ENCODE measurements at regions of chr4 and their contacts with region 1.

Region 1: DNA sequence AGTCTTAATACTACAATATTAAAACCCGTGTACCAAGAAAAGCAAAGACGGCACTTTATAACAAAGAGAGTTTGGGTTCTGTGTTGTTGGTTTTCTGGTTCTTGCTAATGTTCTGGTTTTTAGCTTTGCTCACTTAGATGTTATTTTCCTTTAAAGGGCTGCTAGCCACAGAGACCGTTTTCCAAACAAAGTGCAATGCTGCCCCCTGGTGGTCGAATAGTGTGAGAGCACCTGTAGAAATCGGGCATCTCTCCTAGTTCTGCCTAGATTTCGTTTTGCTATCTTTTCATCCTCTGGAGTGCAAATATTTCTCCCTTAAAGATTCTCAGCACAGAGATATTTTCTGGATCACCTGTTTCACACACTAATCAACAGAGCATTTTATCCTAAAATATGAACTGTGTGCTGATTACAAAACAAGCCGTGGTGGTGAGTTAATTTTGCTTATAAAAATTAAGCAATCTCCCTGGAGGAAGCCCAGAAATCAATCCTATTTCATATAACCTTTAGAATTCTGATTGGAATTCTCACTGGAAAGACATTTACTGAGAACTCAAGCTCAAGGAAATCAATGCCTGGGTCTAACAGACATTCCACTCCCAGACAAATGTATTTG is 334.5 kb upstream of the NOCT start:
- DNase-seq: peak; percentile 62
- H3K4me3 ChIP-seq: no peak overlapping the region
- H3K27ac ChIP-seq: no peak overlapping the region
- H3K4me1 ChIP-seq: peaks cover 0 to 10% of the 10 kb centered on the region in 2 experiments; a peak in 2 of 4 replicates
- H3K27me3 ChIP-seq: no peaks in the 10 kb centered on the region
- CTCF ChIP-seq: peak; percentile 94
- EP300 ChIP-seq: no peak
- RAD21 ChIP-seq: peak; percentile 99

Region 2: GRCh38 chr4:138035781-138036258 is 645.3 kb before region 1 on chr4:
- CTCF ChIA-PET with region 1: interaction called, 49 read pairs
- POLR2A ChIA-PET with region 1: no interaction called
- DNase-seq: peak; percentile 59
- H3K4me3 ChIP-seq: no peak overlapping the region; a peak in 1 of 4 replicates
- H3K27ac ChIP-seq: no peak overlapping the region
- H3K4me1 ChIP-seq: no peaks in the 10 kb centered on the region; a peak in 1 of 4 replicates
- H3K27me3 ChIP-seq: no peaks in the 10 kb centered on the region
- CTCF ChIP-seq: peak; percentile 83
- EP300 ChIP-seq: no peak
- RAD21 ChIP-seq: peak; percentile 90

Region 3: GRCh38 chr4:138096384-138097062 is 584.6 kb before region 1 on chr4:
- CTCF ChIA-PET with region 1: interaction called, 18 read pairs
- POLR2A ChIA-PET with region 1: no interaction called
- DNase-seq: no peak
- H3K4me3 ChIP-seq: no peak overlapping the region
- H3K27ac ChIP-seq: no peak overlapping the region
- H3K4me1 ChIP-seq: no peaks in the 10 kb centered on the region
- H3K27me3 ChIP-seq: no peaks in the 10 kb centered on the region
- CTCF ChIP-seq: no peak
- EP300 ChIP-seq: no peak
- RAD21 ChIP-seq: no peak

Region 4: GRCh38 chr4:138494931-138495330 is 186.2 kb before region 1 on chr4:
- CTCF ChIA-PET with region 1: no interaction called
- POLR2A ChIA-PET with region 1: no interaction called
- DNase-seq: no peak
- H3K4me3 ChIP-seq: no peak overlapping the region
- H3K27ac ChIP-seq: no peak overlapping the region
- H3K4me1 ChIP-seq: no peaks in the 10 kb centered on the region
- H3K27me3 ChIP-seq: no peaks in the 10 kb centered on the region
- CTCF ChIP-seq: peak; percentile 38
- EP300 ChIP-seq: no peak
- RAD21 ChIP-seq: peak; percentile 43

Region 5: GRCh38 chr4:138632856-138633579 is 48.1 kb before region 1 on chr4:
- CTCF ChIA-PET with region 1: no interaction called
- POLR2A ChIA-PET with region 1: no interaction called
- DNase-seq: no peak
- H3K4me3 ChIP-seq: no peak overlapping the region
- H3K27ac ChIP-seq: no peak overlapping the region
- H3K4me1 ChIP-seq: no peaks in the 10 kb centered on the region; a peak in 1 of 4 replicates
- H3K27me3 ChIP-seq: no peaks in the 10 kb centered on the region
- CTCF ChIP-seq: no peak
- EP300 ChIP-seq: no peak
- RAD21 ChIP-seq: no peak

Region 6: GRCh38 chr4:138669479-138670315 is 11.4 kb before region 1 on chr4:
- CTCF ChIA-PET with region 1: interaction called, 15 read pairs
- POLR2A ChIA-PET with region 1: no interaction called
- DNase-seq: no peak
- H3K4me3 ChIP-seq: no peak overlapping the region
- H3K27ac ChIP-seq: no peak overlapping the region
- H3K4me1 ChIP-seq: peaks cover 0 to 3% of the 10 kb centered on the region in 2 experiments; a peak in 1 of 4 replicates
- H3K27me3 ChIP-seq: no peaks in the 10 kb centered on the region
- CTCF ChIP-seq: no peak
- EP300 ChIP-seq: no peak
- RAD21 ChIP-seq: no peak

Region 7: DNA sequence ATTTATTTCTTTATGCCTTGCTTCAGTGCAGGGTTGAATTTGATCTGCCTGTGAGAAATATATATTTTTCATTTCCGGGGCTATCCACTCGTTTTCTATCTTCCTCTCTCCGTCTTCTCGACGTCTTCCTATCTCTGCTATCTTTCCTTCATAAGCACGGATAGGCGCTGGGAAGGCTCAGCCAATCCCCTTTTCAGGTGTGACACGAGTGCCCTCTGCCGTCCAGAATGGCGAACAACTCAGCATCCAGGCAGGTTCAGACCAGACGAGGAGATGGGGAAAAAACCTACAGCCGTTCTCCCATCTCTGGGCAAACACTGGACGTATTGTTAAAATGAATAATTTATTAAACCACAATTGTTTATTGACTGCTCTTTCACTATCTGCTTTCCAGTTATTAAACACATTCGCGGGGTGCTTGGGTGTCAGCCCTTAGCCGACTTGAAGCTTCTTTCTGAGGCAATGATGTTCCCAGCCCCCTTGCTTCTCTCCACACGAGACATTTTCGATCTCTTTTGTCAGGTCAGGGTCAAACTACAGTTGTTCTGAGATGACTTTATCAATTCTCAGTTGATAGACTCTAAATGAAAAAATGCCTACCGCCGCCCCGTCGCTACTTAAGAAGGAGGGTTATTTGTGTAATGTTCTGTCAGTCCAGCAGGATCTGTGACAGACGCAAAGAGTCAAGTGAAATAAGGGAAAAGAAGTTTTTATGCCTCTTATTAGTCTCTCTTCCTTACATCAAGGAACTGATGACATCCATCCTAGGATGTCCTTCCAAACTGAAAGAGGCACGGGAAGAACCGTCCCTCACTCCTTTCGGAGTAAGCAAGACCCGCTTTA is 238.2 kb after region 1 on chr4:
- CTCF ChIA-PET with region 1: interaction called, 25 read pairs
- POLR2A ChIA-PET with region 1: no interaction called
- DNase-seq: peak; percentile 54
- H3K4me3 ChIP-seq: peak overlapping the region in 1 of 2 experiments; percentile 30; a peak in 1 of 4 replicates
- H3K27ac ChIP-seq: peak overlapping the region in 1 of 2 experiments; percentile 29; a peak in 1 of 4 replicates
- H3K4me1 ChIP-seq: peaks cover 0 to 28% of the 10 kb centered on the region in 2 experiments; a peak in 2 of 4 replicates
- H3K27me3 ChIP-seq: no peaks in the 10 kb centered on the region
- CTCF ChIP-seq: peak; percentile 82
- EP300 ChIP-seq: no peak
- RAD21 ChIP-seq: peak; percentile 97

Measured in SK-N-SH (cell line).